Left ventricle myocardium superior (tissue), 1 donor: ENCODE measurements at regions of chr1 and their contacts with region 1.

Region 1: GRCh38 chr1:51189421-51190073 is 46.5 kb upstream of the RNF11 start:
- DNase-seq: no peak
- ATAC-seq: no peak

Region 2: DNA sequence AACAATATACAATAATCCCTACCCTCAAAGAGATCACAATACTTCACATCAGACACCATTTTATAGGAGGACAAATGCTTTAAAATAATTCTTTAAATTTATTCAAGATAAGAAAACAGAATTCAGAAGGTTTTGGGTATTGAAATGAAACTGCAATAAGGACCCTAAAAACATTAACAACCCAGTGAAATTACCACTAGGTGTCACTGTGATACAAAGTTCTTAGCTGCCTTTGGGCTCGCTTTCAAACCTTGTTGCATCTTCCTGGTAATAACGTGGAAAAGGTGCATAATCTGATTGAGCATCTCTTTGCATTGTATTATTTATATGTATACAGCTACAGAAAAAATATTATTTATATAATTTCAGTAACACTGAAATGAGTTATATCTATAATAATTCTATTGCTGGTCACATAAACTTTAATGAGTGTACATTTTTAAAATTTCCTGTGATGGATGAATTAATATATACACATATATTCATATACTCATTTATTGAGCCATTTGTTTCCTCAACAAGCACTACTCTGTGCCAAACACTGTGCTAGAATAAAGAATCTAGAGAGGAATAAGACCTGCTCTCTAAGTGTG is 414.7 kb before region 1 on chr1:
- intact Hi-C with region 1: loop called (anchors 10 kb)
- DNase-seq: no peak
- ATAC-seq: no peak